HCT116 (cell line): ENCODE measurements at regions of chr1 and their contacts with region 1.

Region 1: DNA sequence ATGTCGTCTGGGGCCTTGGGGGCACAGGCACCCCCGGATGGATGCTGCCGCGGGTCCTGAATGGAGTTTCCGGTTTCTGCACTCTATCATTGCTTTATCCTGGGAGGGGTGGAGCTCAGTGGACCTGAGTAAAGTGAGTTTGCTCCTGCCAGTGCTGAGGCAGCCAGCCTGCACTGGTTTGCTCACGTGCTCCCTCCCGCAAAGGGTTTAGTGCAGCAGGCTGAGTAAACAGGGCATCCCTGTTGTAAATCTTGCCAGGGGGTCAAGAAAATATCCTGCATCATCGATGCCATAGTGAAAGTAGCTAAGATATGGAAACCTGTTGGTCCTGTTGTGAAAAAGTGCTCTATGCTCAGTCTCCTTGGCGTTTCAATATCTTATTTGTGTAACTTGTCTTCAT is 85.6 kb upstream of the BRINP3 start:
- DNase-seq: no peak
- ATAC-seq: no peak
- H3K4me3 ChIP-seq: no peak overlapping the region
- H3K27ac ChIP-seq: no peak overlapping the region
- H3K4me1 ChIP-seq: no peaks in the 10 kb centered on the region
- H3K27me3 ChIP-seq: no peaks in the 10 kb centered on the region
- CTCF ChIP-seq: no peak
- POLR2A ChIP-seq: no peak
- RAD21 ChIP-seq: no peak

Region 2: DNA sequence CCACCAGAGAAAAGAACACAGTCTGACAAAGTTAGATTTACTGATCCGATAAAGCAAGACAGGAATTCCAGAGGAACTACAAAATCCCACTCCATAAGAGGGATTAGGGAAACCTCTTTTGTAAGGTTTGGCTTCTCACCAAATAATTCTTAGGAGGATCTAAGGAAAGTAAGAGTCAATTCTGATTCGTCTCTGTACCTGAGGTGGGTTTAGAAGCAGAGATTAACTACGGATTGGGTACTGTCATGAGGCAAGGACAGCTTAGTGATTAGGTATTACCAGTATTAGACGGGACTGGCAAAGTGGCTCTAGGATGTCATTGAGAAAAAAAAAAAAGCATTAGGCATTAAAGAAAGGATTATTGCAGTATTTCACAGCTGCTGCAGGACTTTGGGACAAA is 286.1 kb after region 1 on chr1:
- CTCF ChIA-PET with region 1: no interaction called
- POLR2A ChIA-PET with region 1: no interaction called
- RAD21 ChIA-PET with region 1: no interaction called
- intact Hi-C with region 1: no loop called
- DNase-seq: no peak
- ATAC-seq: no peak
- H3K4me3 ChIP-seq: no peak overlapping the region
- H3K27ac ChIP-seq: no peak overlapping the region
- H3K4me1 ChIP-seq: no peaks in the 10 kb centered on the region
- H3K27me3 ChIP-seq: no peaks in the 10 kb centered on the region
- CTCF ChIP-seq: no peak
- POLR2A ChIP-seq: no peak
- RAD21 ChIP-seq: no peak

Region 3: GRCh38 chr1:191101960-191102359 is 538.7 kb after region 1 on chr1:
- CTCF ChIA-PET with region 1: no interaction called
- POLR2A ChIA-PET with region 1: no interaction called
- RAD21 ChIA-PET with region 1: no interaction called
- intact Hi-C with region 1: loop called (anchors 10 kb)
- DNase-seq: no peak
- ATAC-seq: no peak
- H3K4me3 ChIP-seq: no peak overlapping the region
- H3K27ac ChIP-seq: no peak overlapping the region
- H3K4me1 ChIP-seq: no peaks in the 10 kb centered on the region
- H3K27me3 ChIP-seq: no peaks in the 10 kb centered on the region
- CTCF ChIP-seq: no peak
- POLR2A ChIP-seq: no peak
- RAD21 ChIP-seq: no peak